ENCODE measurements at regions of chr13 and their contacts with region 1.

Region 1: GRCh38 chr13:40190641-40191100 is 475.8 kb downstream of the FOXO1 start:
- DNase-seq: peak; percentile 89
- H3K4me3 ChIP-seq: no peak overlapping the region
- H3K27ac ChIP-seq: peak overlapping the region; percentile 85
- H3K4me1 ChIP-seq: peaks cover 53% of the 10 kb centered on the region
- H3K27me3 ChIP-seq: no peaks in the 10 kb centered on the region
- CTCF ChIP-seq: no peak
- POLR2A ChIP-seq: no peak

Region 2: DNA sequence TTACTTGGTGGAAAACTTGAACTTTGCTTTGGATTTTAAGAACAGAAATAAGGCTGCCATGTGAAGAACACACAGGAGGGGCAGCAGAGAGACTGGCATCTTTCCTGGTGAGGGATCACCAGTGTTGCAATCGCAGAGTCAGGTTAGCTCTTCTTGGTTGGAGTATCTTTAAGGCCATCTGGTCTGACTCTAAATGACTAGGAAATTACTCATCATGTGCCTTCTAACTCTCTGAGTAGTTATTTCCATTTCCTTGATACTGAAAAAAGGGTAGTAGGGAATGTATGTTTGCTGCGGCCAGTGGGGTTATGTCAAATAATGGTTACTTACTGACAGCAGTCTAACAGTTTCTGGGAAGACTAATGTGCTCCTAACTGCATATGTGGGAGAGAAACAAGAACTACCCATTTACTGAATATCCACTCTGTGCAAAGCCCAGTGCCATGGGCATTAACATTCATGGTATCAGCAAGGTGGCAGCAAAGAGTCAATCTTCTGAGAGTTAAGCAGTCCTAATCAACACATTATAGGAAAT is 413.1 kb before region 1 on chr13:
- CTCF ChIA-PET with region 1: interaction called, 3 read pairs
- POLR2A ChIA-PET with region 1: no interaction called
- dilution Hi-C with region 1: no loop called
- intact Hi-C with region 1: loop called (anchors 1 kb)
- DNase-seq: peak; percentile 88
- H3K4me3 ChIP-seq: no peak overlapping the region
- H3K27ac ChIP-seq: peak overlapping the region; percentile 99
- H3K4me1 ChIP-seq: peaks cover 59% of the 10 kb centered on the region
- H3K27me3 ChIP-seq: no peaks in the 10 kb centered on the region
- CTCF ChIP-seq: peak; percentile 51 to 52
- POLR2A ChIP-seq: no peak

Region 3: DNA sequence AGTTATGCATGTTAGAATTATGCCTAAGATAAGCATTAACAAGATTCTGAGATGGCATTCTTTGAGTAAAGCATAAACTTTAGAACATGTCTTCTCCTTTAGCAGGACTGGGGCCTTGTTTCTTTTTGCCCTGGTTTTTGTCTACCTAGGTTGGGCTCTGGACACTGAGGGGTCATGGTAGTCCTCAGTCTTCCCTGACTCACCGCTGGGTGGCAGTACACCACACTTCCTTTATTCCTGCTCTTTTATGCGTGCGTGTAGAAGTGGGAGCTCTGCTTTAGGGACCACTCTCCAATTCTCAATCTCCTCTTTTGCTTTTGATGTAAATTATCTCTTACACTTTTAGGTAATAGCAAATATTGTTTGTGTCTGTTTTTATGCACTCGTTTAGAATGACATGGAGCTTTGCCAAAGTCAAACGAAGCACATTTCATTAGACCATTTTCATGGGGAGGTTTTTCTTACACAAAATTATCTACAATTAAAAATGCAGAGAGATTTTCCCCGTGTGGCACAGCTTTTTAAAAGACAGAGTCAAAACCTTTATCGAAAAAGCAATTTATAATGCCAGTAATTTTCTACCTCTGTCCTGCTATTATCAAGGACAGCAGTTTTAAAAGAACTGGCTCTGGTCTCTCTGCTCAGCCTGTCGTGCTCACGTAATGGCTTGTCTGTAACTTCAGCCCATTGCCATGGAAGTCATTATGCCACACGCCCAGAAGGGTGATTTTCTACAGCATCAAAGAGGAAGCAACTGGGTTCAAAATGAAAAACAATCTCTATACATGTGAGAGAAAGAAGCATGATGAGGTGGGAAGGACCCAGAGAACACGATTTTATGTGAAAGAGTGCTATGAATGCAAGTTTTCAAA is 121.3 kb before region 1 on chr13:
- CTCF ChIA-PET with region 1: interaction called, 15 read pairs
- POLR2A ChIA-PET with region 1: no interaction called
- dilution Hi-C with region 1: no loop called
- intact Hi-C with region 1: loop called (anchors 1 kb)
- DNase-seq: peak; percentile 69
- H3K4me3 ChIP-seq: no peak overlapping the region
- H3K27ac ChIP-seq: no peak overlapping the region
- H3K4me1 ChIP-seq: peaks cover 5% of the 10 kb centered on the region
- H3K27me3 ChIP-seq: no peaks in the 10 kb centered on the region
- CTCF ChIP-seq: peak; percentile 69 to 82
- POLR2A ChIP-seq: no peak

Region 4: DNA sequence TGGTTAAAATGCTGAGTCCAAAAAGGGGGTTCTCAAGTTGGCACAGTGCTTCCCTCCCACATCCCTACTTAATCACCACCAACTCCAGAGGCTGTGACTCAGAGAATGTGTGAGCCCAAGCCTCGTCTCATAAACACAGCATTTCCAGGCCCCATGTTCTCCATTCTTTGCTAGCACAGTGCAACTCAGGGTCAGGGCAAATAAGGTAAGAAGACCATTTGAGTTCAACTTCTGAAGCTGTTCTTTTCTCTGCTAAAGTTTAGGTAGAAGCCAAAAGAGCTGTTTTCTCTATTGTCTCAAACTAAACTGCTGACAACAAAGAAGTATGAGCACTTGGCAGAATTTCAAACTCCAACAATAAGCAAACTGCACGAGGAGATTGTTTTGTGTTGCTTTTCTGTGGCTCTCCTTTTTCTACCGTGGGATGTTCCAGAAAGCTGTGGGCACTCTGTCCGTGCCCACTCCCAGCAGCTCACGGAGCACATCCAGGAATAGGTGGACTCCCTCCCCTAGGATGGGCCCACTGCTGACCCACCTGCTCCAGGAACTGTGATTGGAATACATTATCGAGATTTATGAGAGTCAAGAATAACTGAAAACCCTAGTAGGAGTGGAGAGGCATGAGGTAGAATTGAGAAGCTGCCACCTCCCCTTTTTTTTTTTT is 40.9 kb before region 1 on chr13:
- CTCF ChIA-PET with region 1: interaction called, 9 read pairs
- POLR2A ChIA-PET with region 1: no interaction called
- dilution Hi-C with region 1: no loop called
- intact Hi-C with region 1: loop called (anchors 5 kb)
- DNase-seq: peak; percentile 98
- H3K4me3 ChIP-seq: no peak overlapping the region
- H3K27ac ChIP-seq: peak overlapping the region; percentile 80
- H3K4me1 ChIP-seq: peaks cover 25% of the 10 kb centered on the region
- H3K27me3 ChIP-seq: no peaks in the 10 kb centered on the region
- CTCF ChIP-seq: no peak
- POLR2A ChIP-seq: no peak

Region 5: DNA sequence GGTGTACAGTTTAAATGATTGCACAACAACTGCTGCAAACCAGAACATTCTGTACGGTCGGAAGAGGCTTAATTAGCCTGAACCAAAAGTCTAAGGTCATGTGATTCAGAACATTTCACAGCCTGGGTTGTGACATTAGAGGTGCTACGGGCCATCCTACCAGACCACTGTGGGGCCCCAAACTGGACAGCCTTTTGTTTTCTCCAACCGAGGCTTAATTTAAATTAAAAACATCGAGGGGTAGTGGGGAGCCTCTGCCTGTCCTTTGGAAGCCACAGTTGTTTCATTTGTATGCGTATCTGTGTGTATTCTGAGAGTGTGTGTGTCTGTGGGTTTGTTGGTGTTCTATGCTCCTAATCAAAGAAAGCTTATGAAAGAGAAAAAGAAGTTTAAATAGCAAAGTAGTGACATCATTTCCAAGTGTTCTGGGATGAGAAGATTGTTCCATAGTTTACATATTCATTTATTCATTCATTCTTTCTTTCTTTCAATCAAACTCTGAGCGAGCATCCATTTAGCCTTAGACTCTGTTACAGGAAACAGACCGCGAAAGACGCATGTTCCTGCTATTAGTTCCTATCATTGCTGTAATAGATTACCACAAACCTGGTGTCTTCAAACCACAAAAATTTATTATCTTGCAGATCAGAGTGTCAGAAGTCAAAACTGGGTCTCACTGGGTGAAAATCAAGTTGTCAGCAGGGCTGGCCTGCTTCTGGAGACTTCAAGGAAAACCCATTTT is 31.0 kb after region 1 on chr13:
- CTCF ChIA-PET with region 1: no interaction called
- POLR2A ChIA-PET with region 1: no interaction called
- dilution Hi-C with region 1: no loop called
- intact Hi-C with region 1: no loop called
- DNase-seq: no peak
- H3K4me3 ChIP-seq: no peak overlapping the region
- H3K27ac ChIP-seq: no peak overlapping the region
- H3K4me1 ChIP-seq: no peaks in the 10 kb centered on the region
- H3K27me3 ChIP-seq: no peaks in the 10 kb centered on the region
- CTCF ChIP-seq: no peak
- POLR2A ChIP-seq: no peak

Region 6: GRCh38 chr13:40318366-40318765 is 127.7 kb after region 1 on chr13:
- CTCF ChIA-PET with region 1: no interaction called
- POLR2A ChIA-PET with region 1: no interaction called
- dilution Hi-C with region 1: no loop called
- intact Hi-C with region 1: loop called (anchors 1 kb)
- DNase-seq: peak; percentile 55
- H3K4me3 ChIP-seq: no peak overlapping the region
- H3K27ac ChIP-seq: no peak overlapping the region
- H3K4me1 ChIP-seq: peaks cover 16% of the 10 kb centered on the region
- H3K27me3 ChIP-seq: no peaks in the 10 kb centered on the region
- CTCF ChIP-seq: no peak
- POLR2A ChIP-seq: no peak

Region 7: DNA sequence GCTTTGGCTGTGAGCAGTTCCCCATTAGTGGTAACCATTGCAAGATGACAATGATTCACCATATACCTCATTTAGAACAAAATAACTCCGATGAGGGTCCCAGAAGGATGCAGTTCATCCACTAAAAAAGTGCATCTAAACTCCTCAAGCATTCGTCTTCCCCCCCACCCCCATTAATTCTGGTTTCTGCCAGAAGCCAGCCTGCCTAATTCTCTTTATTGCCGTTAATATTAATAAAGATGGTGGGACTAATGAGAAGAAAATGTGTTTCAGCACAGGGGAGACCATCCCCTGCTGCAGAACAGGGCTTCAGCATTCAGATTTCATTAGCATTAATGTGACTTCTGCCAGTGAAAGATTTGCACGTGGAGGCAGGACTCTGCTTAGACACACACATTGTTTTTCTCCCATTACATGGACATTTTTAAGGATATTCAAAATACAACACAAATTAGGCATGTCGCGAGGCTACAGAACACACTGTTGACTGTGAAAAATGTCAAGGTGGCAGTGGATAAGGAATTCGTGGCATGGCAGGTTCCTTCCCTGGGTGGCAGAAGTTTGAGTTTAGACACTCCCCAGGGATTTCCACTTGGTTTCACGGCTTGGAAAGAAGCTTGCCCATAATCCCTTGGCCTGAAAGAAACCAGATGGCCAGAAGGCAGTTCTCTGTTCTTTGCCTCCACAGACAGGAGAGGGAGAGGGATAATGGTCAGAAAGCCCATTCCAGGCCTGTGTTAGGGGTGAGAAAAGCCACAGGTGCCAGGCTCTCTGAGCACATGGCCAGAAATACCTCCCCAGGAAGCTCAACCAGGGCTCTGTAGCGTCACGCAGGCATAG is 239.3 kb after region 1 on chr13:
- CTCF ChIA-PET with region 1: no interaction called
- POLR2A ChIA-PET with region 1: no interaction called
- dilution Hi-C with region 1: no loop called
- intact Hi-C with region 1: no loop called
- DNase-seq: no peak
- H3K4me3 ChIP-seq: no peak overlapping the region
- H3K27ac ChIP-seq: no peak overlapping the region
- H3K4me1 ChIP-seq: no peaks in the 10 kb centered on the region
- H3K27me3 ChIP-seq: no peaks in the 10 kb centered on the region
- CTCF ChIP-seq: no peak
- POLR2A ChIP-seq: no peak

Region 8: GRCh38 chr13:40517486-40518480 is 327.1 kb after region 1 on chr13:
- CTCF ChIA-PET with region 1: no interaction called
- POLR2A ChIA-PET with region 1: no interaction called
- dilution Hi-C with region 1: no loop called
- intact Hi-C with region 1: no loop called
- DNase-seq: no peak
- H3K4me3 ChIP-seq: no peak overlapping the region
- H3K27ac ChIP-seq: no peak overlapping the region
- H3K4me1 ChIP-seq: peaks cover 4% of the 10 kb centered on the region
- H3K27me3 ChIP-seq: no peaks in the 10 kb centered on the region
- CTCF ChIP-seq: no peak
- POLR2A ChIP-seq: no peak

Region 9: DNA sequence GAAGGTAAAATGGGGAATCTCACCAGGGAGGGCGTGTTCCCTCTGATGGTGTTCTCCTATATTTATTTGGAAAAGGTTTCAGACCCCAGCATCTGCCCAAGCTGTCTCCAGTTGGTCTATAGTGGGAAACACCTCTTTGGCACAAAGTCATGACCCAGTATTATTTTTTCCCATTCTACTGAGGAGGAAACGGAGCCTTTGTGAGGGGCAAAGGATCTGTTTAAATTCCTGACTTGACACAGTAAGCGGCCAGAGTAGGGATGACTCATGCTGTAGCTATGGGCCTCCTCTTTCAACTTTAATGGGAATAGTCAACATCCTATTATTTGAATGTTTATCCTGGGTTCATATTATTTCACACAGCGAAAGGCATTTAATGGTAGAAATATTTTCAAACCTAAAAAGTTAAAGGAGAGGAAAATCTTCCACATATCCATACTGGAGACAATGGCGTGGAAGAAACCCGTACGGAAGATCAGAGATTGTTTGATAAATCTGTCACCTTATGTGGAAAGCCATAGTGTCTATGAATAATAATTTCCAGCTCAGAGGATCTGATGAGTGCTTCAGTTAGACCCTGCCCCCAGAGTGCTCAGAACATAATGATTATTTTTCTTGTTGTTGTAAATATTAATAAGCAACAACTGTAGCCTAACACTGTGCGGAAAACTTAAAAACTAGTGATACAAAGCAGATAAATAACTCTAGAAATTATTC is 349.8 kb after region 1 on chr13:
- CTCF ChIA-PET with region 1: no interaction called
- POLR2A ChIA-PET with region 1: no interaction called
- dilution Hi-C with region 1: no loop called
- intact Hi-C with region 1: loop called (anchors 1 kb)
- DNase-seq: peak; percentile 96
- H3K4me3 ChIP-seq: no peak overlapping the region
- H3K27ac ChIP-seq: peak overlapping the region; percentile 80
- H3K4me1 ChIP-seq: peaks cover 18% of the 10 kb centered on the region
- H3K27me3 ChIP-seq: no peaks in the 10 kb centered on the region
- CTCF ChIP-seq: no peak
- POLR2A ChIP-seq: no peak

Region 10: GRCh38 chr13:40682449-40683240 is 492.0 kb after region 1 on chr13:
- CTCF ChIA-PET with region 1: interaction called, 4 read pairs
- POLR2A ChIA-PET with region 1: interaction called, 4 read pairs
- dilution Hi-C with region 1: no loop called
- intact Hi-C with region 1: loop called (anchors 1 kb)
- DNase-seq: peak; percentile 63
- H3K4me3 ChIP-seq: no peak overlapping the region
- H3K27ac ChIP-seq: peak overlapping the region; percentile 73
- H3K4me1 ChIP-seq: peaks cover 22% of the 10 kb centered on the region
- H3K27me3 ChIP-seq: no peaks in the 10 kb centered on the region
- CTCF ChIP-seq: peak; percentile 11 to 21
- POLR2A ChIP-seq: no peak